HEK293T (cell line): ENCODE measurements at regions of chr17 and their contacts with region 1.

Region 1: GRCh38 chr17:82022981-82023374 is at the start of gene LRRC45:
- DNase-seq: peak; percentile 97

Region 2: GRCh38 chr17:81959362-81960129 is 63.4 kb before region 1 on chr17:
- CTCF ChIA-PET with region 1: interaction called, 34 read pairs
- POLR2A ChIA-PET with region 1: interaction called, 13 read pairs
- DNase-seq: peak; percentile 67

Region 3: GRCh38 chr17:81977211-81978027 is 45.6 kb before region 1 on chr17 and contains the start of gene ASPSCR1:
- CTCF ChIA-PET with region 1: no interaction called
- POLR2A ChIA-PET with region 1: interaction called, 12 read pairs
- DNase-seq: peak; percentile 98